ENCODE measurements at regions of chr3 and their contacts with region 1.

Region 1: GRCh38 chr3:60854791-60855190 is 396.5 kb downstream of the FHIT start:
- DNase-seq: no peak
- H3K4me3 ChIP-seq: no peak overlapping the region
- CTCF ChIP-seq: no peak
- POLR2A ChIP-seq: no peak

Region 2: DNA sequence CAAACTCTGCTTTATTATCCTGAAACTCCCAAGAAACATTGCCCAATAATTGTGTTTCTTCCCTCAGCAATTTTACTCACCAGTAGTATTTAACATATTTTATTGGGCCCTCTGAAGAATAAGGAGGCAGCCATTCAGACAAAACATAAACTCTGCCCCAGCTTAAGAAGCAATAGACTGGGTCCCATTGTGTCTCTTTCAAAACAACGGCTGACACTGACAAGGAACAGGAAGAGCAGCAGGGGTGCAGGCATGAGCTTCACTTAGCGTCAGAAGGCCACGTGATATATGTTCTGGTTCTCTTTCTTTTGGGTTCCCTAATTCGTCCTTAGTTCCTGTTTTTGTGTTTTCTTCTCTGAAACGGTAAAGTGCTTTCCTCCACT is 154.2 kb after region 1 on chr3:
- intact Hi-C with region 1: no loop called
- DNase-seq: peak in 1 of 2 donors; percentile 17
- H3K4me3 ChIP-seq: no peak overlapping the region
- CTCF ChIP-seq: no peak
- POLR2A ChIP-seq: no peak

Region 3: DNA sequence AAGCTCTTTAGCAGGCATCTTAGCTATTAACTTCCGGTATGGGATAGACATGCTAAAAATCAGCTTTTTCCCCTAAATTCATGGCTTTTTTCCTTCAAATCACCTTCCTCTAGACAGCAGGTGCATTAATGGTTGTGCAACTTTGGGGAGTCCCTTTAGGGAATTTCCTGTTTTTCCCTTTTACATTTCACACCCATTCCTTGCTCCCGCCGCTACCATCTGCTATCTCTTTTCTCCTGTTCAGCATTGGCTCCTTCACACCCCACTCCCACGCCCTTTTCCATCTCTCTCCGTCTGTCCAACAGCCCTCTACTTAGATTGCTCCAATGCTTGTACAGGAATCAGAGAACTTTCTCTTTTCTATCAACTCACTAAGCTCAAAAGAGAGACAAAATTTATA is 1475.2 kb after region 1 on chr3:
- intact Hi-C with region 1: loop called (anchors 5 kb)
- DNase-seq: no peak
- H3K4me3 ChIP-seq: no peak overlapping the region
- CTCF ChIP-seq: no peak
- POLR2A ChIP-seq: no peak

Measured in lower leg skin (tissue), 4 donors.